ENCODE measurements at regions of chr7 and their contacts with region 1.

Region 1: DNA sequence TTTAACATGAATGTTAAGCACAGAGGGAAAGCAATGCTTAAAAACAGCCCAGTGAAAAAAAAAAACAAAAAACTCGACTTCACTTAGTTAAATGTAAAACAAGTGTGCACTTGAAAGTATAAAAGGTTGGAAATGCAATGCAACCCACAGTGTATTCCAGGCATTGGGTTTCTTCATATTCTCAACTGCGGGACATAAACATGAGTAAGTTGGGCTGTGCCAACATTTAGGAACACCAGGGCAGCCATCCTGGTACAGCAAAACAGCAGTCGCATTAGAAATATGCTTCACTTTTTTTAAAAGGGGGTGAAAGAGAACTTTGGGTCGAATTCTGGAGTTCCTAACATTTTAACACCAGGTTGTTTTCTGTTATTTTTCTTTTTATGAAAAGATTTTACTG is 937 bp downstream of the STEAP1 start:
- DNase-seq: no peak
- ATAC-seq: no peak
- H3K4me3 ChIP-seq: no peak overlapping the region
- H3K27ac ChIP-seq: no peak overlapping the region
- H3K4me1 ChIP-seq: no peaks in the 10 kb centered on the region
- H3K27me3 ChIP-seq: no peaks in the 10 kb centered on the region
- CTCF ChIP-seq: no peak
- EP300 ChIP-seq: no peak
- POLR2A ChIP-seq: no peak
- RAD21 ChIP-seq: no peak

Region 2: DNA sequence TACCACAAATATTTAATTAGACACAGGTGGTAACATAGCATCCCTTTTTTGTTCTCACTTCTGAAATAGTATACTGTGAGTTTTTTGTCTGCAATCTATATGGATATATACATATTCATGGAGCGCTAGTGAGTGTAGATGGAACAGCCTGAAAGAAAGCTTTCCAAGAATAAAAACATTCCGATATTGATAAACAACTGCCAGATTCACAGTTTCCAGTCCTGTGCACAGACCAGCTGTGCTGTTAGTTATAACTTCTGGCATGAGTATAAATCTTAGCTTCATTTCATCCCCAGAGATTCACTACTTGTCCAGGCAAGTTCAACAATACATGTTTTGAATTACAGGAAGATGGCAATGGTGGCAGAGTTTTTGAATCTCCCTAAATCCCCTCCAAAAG is 468.0 kb before region 1 on chr7:
- CTCF ChIA-PET with region 1: no interaction called
- POLR2A ChIA-PET with region 1: no interaction called
- RAD21 ChIA-PET with region 1: no interaction called
- SMC1A ChIA-PET with region 1: no interaction called
- in situ Hi-C with region 1: no loop called
- intact Hi-C with region 1: no loop called
- DNase-seq: no peak
- ATAC-seq: no peak
- H3K4me3 ChIP-seq: no peak overlapping the region
- H3K27ac ChIP-seq: no peak overlapping the region
- H3K4me1 ChIP-seq: no peaks in the 10 kb centered on the region
- H3K27me3 ChIP-seq: no peaks in the 10 kb centered on the region
- CTCF ChIP-seq: no peak
- EP300 ChIP-seq: no peak
- POLR2A ChIP-seq: no peak
- RAD21 ChIP-seq: no peak

Region 3: GRCh38 chr7:90188281-90188680 is 33.1 kb after region 1 on chr7:
- CTCF ChIA-PET with region 1: interaction called, 5 read pairs
- POLR2A ChIA-PET with region 1: no interaction called
- RAD21 ChIA-PET with region 1: interaction called, 9 read pairs
- SMC1A ChIA-PET with region 1: interaction called, 10 read pairs
- in situ Hi-C with region 1: no loop called
- intact Hi-C with region 1: no loop called
- DNase-seq: no peak
- ATAC-seq: peak; percentile 95
- H3K4me3 ChIP-seq: no peak overlapping the region
- H3K27ac ChIP-seq: no peak overlapping the region
- H3K4me1 ChIP-seq: no peaks in the 10 kb centered on the region
- H3K27me3 ChIP-seq: no peaks in the 10 kb centered on the region
- CTCF ChIP-seq: no peak
- EP300 ChIP-seq: no peak
- POLR2A ChIP-seq: no peak
- RAD21 ChIP-seq: no peak

Region 4: GRCh38 chr7:90244909-90245851 is 90.0 kb after region 1 on chr7 and contains the start of gene CFAP69:
- CTCF ChIA-PET with region 1: interaction called, 35 read pairs
- POLR2A ChIA-PET with region 1: interaction called, 7 read pairs
- RAD21 ChIA-PET with region 1: interaction called, 13 read pairs
- SMC1A ChIA-PET with region 1: interaction called, 16 read pairs
- in situ Hi-C with region 1: no loop called
- intact Hi-C with region 1: loop called (anchors 1 kb)
- DNase-seq: peak; percentile 46
- ATAC-seq: peak; percentile 69
- H3K4me3 ChIP-seq: peak within 1 kb of the TSS; percentile 66
- H3K27ac ChIP-seq: no peak within 1 kb of the TSS
- H3K4me1 ChIP-seq: peaks cover 5% of the 10 kb centered on the region; the same call in 1 of the 2 replicates
- H3K27me3 ChIP-seq: peaks cover 0 to 6% of the 10 kb centered on the region in 2 experiments; a peak in 1 of 4 replicates
- CTCF ChIP-seq: peak in 2 of 3 experiments; percentile 7 to 30; a peak in 1 of 6 replicates
- EP300 ChIP-seq: peak in 1 of 2 experiments; percentile 62; a peak in 2 of 4 replicates
- POLR2A ChIP-seq: peak; percentile 31; the same call in 1 of the 2 replicates
- RAD21 ChIP-seq: no peak
- polyA plus RNA-seq, gene CFAP69: 0.11 TPM in 1 of 2 experiments, not detected in the other

Region 5: DNA sequence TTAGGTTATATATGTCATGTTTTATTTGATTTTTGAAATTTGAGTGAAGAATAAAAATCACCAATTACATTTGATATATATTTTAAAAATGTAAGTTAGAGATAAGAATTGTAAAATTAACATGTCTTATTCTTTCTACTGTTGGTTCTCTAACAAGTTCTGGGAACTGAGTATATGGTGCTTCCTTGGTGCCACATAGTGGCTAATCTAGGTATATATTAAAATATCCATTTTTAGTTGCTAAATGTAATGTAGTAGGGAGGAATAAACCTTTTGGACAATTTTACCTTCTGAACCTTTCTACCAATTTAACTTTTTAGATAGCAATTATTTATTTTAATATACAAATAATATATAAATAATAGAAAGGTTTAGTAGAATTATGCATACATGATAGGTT is 107.2 kb after region 1 on chr7:
- CTCF ChIA-PET with region 1: interaction called, 53 read pairs
- POLR2A ChIA-PET with region 1: interaction called, 4 read pairs
- RAD21 ChIA-PET with region 1: interaction called, 28 read pairs
- SMC1A ChIA-PET with region 1: interaction called, 39 read pairs
- in situ Hi-C with region 1: no loop called
- intact Hi-C with region 1: loop called (anchors 1 kb)
- DNase-seq: no peak
- ATAC-seq: peak; percentile 92
- H3K4me3 ChIP-seq: no peak overlapping the region
- H3K27ac ChIP-seq: no peak overlapping the region
- H3K4me1 ChIP-seq: no peaks in the 10 kb centered on the region
- H3K27me3 ChIP-seq: 0 out of 4 replicates have a peak, but pooled peaks cover 0 to under 1% of the 10 kb centered on the region in 2 experiments
- CTCF ChIP-seq: peak; percentile 28 to 68 (median 32); a peak in 4 of 6 replicates
- EP300 ChIP-seq: no peak
- POLR2A ChIP-seq: no peak
- RAD21 ChIP-seq: peak; percentile 82

Region 6: GRCh38 chr7:90412458-90413184 is 257.4 kb after region 1 on chr7:
- CTCF ChIA-PET with region 1: interaction called, 5 read pairs
- POLR2A ChIA-PET with region 1: no interaction called
- RAD21 ChIA-PET with region 1: interaction called, 4 read pairs
- SMC1A ChIA-PET with region 1: interaction called, 4 read pairs
- in situ Hi-C with region 1: no loop called
- intact Hi-C with region 1: loop called (anchors 5 kb)
- DNase-seq: no peak
- ATAC-seq: peak; percentile 90
- H3K4me3 ChIP-seq: no peak overlapping the region
- H3K27ac ChIP-seq: no peak overlapping the region
- H3K4me1 ChIP-seq: no peaks in the 10 kb centered on the region
- H3K27me3 ChIP-seq: no peaks in the 10 kb centered on the region
- CTCF ChIP-seq: peak; percentile 39 to 58 (median 53); a peak in 5 of 6 replicates
- EP300 ChIP-seq: no peak
- POLR2A ChIP-seq: no peak
- RAD21 ChIP-seq: peak; percentile 44; the same call in 1 of the 2 replicates